WTC11 (cell line): ENCODE measurements at regions of chr18 and their contacts with region 1.

Region 1: GRCh38 chr18:58871514-58872420 is 7.1 kb downstream of the ZNF532 start:
- DNase-seq: no peak
- ATAC-seq: no peak
- H3K4me3 Mint-ChIP-seq: no peak overlapping the region
- H3K27ac Mint-ChIP-seq: peak overlapping the region; percentile 86
- H3K4me1 Mint-ChIP-seq: peaks cover 80% of the 10 kb centered on the region
- H3K27me3 Mint-ChIP-seq: no peaks in the 10 kb centered on the region
- CTCF ChIP-seq: no peak

Region 2: DNA sequence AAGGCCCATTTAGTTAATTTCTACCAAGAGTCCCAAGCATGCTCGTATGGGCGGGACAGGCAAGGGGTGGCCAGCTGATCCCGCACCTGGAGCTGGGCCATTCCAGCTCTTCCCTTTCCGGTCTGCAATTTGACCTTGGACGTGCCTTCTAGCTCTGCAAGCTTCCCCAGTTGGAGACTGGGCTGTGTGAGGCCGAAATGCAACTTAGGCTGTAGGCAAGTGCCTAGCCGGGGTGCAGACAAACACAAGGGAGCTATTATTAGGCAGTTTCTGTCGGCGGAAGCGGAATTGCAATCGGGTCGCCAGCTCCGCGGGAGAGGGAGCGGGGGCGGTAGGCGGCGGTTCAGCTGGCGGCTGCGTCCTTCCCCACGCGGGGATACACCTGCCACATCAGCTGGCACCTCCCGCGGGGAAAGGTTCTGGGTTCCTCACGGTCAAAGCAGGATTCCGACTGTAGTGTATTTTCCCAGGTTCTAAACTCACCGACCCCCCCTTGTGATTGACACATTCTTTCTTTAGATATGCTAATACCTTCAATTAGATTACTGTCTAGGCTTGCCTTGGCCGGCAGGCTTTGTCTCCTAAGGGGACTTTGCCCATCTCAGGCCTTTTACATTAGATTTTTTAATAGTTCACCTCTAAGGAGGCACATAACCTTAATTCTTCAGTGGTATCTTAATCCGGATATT is 24.2 kb before region 1 on chr18:
- CTCF ChIA-PET with region 1: interaction called, 19 read pairs
- POLR2A ChIA-PET with region 1: interaction called, 42 read pairs
- DNase-seq: peak; percentile 96
- ATAC-seq: peak; percentile 72
- H3K4me3 Mint-ChIP-seq: peak overlapping the region; percentile 56
- H3K27ac Mint-ChIP-seq: peak overlapping the region; percentile 99
- H3K4me1 Mint-ChIP-seq: peaks cover 91% of the 10 kb centered on the region
- H3K27me3 Mint-ChIP-seq: no peaks in the 10 kb centered on the region
- CTCF ChIP-seq: no peak